Endothelial cell of umbilical vein (primary cell): ENCODE measurements at regions of chr16 and their contacts with region 1.

Region 1: DNA sequence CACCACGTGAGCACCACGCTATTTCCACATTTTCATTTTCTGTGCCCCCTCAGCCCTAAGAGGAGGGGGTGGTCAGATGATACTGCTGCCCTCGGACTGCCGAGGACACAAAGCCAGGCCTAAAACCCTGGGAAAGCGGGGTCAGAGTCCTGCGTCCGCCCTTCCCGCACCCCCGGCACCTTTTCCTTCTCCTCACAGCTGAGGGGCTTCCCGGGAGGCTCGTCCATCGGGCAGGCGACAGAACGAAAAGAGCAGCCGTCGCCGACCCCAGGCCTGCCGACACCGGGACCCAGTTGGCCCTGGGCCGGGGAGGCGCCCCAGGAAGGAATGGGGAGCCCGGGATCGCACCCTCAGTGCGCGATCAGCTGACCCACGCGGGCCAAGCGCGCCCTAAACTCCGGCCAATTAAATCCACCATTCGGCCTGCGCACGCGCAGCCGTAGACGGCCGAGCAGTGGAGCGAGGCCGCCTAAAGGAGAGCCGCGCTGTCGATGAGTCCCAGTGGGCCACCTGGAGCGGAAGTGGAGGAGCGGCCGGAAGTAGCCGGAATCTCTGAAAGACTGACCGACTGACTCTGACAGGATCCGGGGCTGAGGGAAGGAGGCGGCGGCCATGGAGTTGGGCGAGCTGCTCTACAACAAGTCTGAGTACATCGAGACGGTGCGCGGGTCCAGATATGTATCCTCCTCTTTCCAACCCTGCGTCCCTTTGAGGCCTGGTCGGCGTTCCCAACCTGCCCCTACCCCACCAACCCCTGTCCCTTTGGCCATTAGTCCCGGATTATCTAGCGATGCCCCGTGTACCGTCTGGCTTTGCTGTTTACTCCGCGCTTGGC is at the starts of genes DCTN5 and PALB2:
- DNase-seq: peak; percentile 94
- H3K4me3 ChIP-seq: peak within 1 kb of the TSS; percentile 68 to 99 (median 99)
- H3K27ac ChIP-seq: peak within 1 kb of the TSS; percentile 96
- H3K4me1 ChIP-seq: peaks cover 15% of the 10 kb centered on the region
- H3K27me3 ChIP-seq: no peaks in the 10 kb centered on the region
- CTCF ChIP-seq: no peak
- POLR2A ChIP-seq: peak; percentile 93
- total RNA-seq, gene DCTN5: 80.8 and 83.5 TPM in 2 replicates
- total RNA-seq, gene PALB2: 11.8 and 15.6 TPM in 2 replicates

Region 2: GRCh38 chr16:23510164-23510914 is 130.8 kb before region 1 on chr16 and contains the start of gene GGA2:
- CTCF ChIA-PET with region 1: no interaction called
- POLR2A ChIA-PET with region 1: interaction called, 3 read pairs
- dilution Hi-C with region 1: no loop called
- intact Hi-C with region 1: loop called (anchors 1 kb)
- DNase-seq: peak; percentile 91
- H3K4me3 ChIP-seq: peak within 1 kb of the TSS; percentile 10 to 69 (median 60)
- H3K27ac ChIP-seq: peak within 1 kb of the TSS; percentile 27
- H3K4me1 ChIP-seq: peaks cover under 1% of the 10 kb centered on the region
- H3K27me3 ChIP-seq: no peaks in the 10 kb centered on the region
- CTCF ChIP-seq: no peak
- POLR2A ChIP-seq: peak; percentile 88
- total RNA-seq, gene GGA2: 67.5 and 73.1 TPM in 2 replicates

Region 3: DNA sequence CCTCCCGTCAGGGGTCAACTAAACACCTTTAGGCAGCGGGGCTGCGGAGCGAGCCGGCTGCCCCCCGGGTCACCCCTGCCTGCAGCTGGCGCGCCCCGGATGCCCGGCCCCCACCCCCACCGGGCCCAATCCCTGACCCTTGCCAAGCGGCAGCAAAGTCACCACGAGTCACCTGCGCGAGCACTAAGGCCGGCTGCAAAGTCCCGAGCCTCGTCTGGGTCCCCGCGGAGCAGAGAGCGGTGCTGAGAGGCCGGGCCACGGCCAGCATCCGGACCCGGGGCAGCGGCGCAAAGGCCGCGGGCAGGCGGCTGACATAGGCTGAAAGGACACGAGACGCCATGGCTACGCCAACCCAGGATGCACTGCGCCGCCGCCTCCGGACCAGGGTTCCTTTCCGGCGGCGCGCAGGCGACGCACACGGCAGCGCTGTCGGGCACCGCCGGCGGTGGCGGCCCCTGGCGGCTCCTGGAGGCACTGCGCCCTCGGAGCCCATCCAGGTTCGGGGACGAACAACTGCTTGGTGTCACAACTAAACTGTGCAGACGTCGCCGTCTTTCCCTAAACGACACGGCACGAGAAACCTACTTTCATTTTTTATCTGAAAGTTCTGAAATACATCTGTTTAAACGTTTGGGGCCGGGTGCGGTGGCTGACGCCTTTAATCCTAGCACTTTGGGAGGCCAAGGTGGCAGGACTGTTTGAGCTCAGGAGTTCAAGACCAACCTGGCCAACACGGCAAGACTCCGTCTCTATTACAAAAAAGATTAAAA is 45.0 kb before region 1 on chr16 and contains the start of gene NDUFAB1:
- CTCF ChIA-PET with region 1: interaction called, 6 read pairs
- POLR2A ChIA-PET with region 1: interaction called, 4 read pairs
- dilution Hi-C with region 1: no loop called
- intact Hi-C with region 1: loop called (anchors 1 kb)
- DNase-seq: peak; percentile 90
- H3K4me3 ChIP-seq: peak within 1 kb of the TSS; percentile 77 to 89 (median 87)
- H3K27ac ChIP-seq: peak within 1 kb of the TSS; percentile 59
- H3K4me1 ChIP-seq: peaks cover 7% of the 10 kb centered on the region
- H3K27me3 ChIP-seq: no peaks in the 10 kb centered on the region
- CTCF ChIP-seq: peak; percentile 91 to 99
- POLR2A ChIP-seq: peak; percentile 83
- total RNA-seq, gene NDUFAB1: 109 and 112 TPM in 2 replicates

Region 4: GRCh38 chr16:23608194-23608593 is 33.0 kb before region 1 on chr16:
- CTCF ChIA-PET with region 1: no interaction called
- POLR2A ChIA-PET with region 1: no interaction called
- dilution Hi-C with region 1: no loop called
- intact Hi-C with region 1: loop called (anchors 1 kb)
- DNase-seq: peak; percentile 93
- H3K4me3 ChIP-seq: peak overlapping the region in 1 of 3 experiments; percentile 28
- H3K27ac ChIP-seq: peak overlapping the region; percentile 96
- H3K4me1 ChIP-seq: peaks cover 13% of the 10 kb centered on the region
- H3K27me3 ChIP-seq: no peaks in the 10 kb centered on the region
- CTCF ChIP-seq: no peak
- POLR2A ChIP-seq: peak; percentile 38

Region 5: DNA sequence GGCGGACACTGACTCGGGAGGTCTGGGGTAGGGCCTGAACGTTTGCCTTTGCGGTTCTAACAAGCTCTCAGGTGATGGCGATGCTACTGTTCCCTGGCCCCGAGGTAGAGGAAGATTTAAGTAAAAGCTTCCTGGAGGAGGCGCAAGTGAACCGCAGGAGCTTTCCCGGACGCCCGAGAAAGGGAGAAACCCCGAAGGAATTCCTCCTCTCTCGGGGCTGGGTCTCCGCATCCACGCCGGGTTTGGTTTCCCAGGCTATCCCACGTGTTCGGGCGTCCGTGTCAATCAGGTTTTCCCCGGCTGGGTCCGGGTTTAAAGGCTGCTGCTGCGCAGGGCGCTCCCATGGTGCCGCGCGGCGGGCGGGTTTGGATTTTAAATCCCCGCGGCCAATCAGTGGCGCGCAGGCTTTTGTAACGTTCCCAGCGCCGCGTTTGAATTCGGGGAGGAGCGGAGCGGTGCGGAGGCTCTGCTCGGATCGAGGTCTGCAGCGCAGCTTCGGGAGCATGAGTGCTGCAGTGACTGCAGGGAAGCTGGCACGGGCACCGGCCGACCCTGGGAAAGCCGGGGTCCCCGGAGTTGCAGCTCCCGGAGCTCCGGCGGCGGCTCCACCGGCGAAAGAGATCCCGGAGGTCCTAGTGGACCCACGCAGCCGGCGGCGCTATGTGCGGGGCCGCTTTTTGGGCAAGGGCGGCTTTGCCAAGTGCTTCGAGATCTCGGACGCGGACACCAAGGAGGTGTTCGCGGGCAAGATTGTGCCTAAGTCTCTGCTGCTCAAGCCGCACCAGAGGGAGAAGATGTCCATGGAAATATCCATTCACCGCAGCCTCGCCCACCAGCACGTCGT is 37.5 kb after region 1 on chr16 and contains the start of gene PLK1:
- CTCF ChIA-PET with region 1: interaction called, 3 read pairs
- POLR2A ChIA-PET with region 1: interaction called, 3 read pairs
- dilution Hi-C with region 1: no loop called
- intact Hi-C with region 1: loop called (anchors 2 kb)
- DNase-seq: peak; percentile 84
- H3K4me3 ChIP-seq: peak within 1 kb of the TSS; percentile 55 to 77 (median 68)
- H3K27ac ChIP-seq: peak within 1 kb of the TSS; percentile 4
- H3K4me1 ChIP-seq: peaks cover 27% of the 10 kb centered on the region
- H3K27me3 ChIP-seq: no peaks in the 10 kb centered on the region
- CTCF ChIP-seq: peak in 1 of 2 donors; percentile 33
- POLR2A ChIP-seq: no peak
- total RNA-seq, gene PLK1: 100 and 109 TPM in 2 replicates

Region 6: GRCh38 chr16:24347556-24347955 is 706.4 kb after region 1 on chr16:
- CTCF ChIA-PET with region 1: no interaction called
- POLR2A ChIA-PET with region 1: no interaction called
- dilution Hi-C with region 1: no loop called
- intact Hi-C with region 1: no loop called
- DNase-seq: no peak
- H3K4me3 ChIP-seq: no peak overlapping the region
- H3K27ac ChIP-seq: no peak overlapping the region
- H3K4me1 ChIP-seq: no peaks in the 10 kb centered on the region
- H3K27me3 ChIP-seq: no peaks in the 10 kb centered on the region
- CTCF ChIP-seq: no peak
- POLR2A ChIP-seq: no peak